ENCODE measurements at regions of chr1 and their contacts with region 1.

Region 1: DNA sequence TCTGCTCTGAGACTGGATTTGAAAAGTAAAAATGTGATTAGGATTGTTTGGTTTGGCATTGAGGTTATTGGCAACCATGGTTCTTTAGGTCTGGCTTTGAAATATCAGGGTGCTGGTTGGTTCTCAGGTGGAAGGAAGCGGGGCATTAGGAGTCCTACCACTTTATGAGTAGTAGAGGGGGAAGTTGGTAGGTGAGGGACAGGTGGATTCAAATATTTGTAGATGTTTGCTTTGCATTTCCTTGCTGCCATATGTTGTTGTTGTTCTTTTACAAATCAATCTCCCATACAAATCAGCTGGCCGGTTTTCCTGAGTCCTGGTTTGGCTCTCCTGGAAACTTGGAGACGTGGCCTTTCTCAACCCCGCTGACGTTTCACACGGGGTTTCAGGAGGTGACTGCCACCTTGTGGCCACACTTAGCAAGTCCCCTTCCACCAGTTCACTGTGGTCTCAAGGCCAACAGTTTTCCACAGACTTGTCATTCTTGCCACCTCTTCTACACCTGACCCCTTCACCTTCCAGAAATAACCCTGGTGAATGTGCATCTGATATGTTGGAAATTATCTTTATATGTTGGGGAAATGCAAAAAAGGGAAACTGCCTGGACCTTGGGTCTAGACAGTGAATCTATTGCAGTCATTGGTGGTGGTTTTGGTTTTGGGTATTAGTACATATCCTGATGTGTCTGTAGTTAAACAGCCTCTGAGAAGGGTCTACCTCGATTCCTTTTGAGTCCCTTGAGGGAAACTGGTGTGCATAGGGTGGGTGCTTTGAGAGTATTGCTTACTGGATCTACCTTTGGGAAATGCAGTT is 127.0 kb upstream of the KIAA0040 start:
- DNase-seq: peak; percentile 72
- H3K4me3 Mint-ChIP-seq: no peak overlapping the region
- H3K27ac Mint-ChIP-seq: no peak overlapping the region
- H3K4me1 Mint-ChIP-seq: peaks cover 10% of the 10 kb centered on the region
- H3K27me3 Mint-ChIP-seq: peaks cover 8% of the 10 kb centered on the region

Region 2: DNA sequence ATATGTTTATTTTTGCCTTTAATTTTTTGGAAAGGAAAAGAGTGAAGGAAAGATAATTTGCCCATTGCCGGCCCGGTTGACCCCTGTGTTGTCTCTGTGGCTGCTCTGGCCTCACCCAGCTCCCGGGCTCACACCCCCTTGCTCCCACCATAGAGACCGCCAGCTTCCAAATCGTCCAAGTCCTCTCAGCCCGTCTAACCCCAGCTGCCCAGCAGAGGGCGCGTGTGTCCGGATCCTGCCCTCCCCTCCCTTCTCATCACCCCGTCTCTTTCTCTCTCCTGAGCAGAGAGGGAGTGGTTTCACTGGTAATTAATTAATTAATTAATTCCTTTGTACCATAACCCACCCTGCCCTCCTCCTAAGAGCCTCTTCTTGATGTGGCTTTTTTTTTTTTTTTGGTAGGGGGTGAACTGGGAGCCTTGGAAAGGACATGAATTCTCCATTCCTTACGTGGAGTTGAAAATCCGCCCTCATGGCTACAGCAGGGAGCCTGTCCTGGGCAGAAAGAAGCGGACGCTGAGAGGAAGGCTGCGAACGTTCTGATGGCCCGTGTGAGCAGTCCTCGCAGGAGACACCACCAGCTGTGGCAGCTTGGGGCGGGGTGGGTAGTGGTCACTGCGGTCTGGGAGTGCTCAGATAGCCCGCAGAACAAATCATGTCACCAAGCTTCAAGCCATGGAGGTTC is 173.0 kb before region 1 on chr1:
- CTCF ChIA-PET with region 1: interaction called, 238 read pairs
- POLR2A ChIA-PET with region 1: interaction called, 14 read pairs
- DNase-seq: peak; percentile 70
- H3K4me3 Mint-ChIP-seq: no peak overlapping the region
- H3K27ac Mint-ChIP-seq: no peak overlapping the region
- H3K4me1 Mint-ChIP-seq: peaks cover 7% of the 10 kb centered on the region
- H3K27me3 Mint-ChIP-seq: peaks cover 27% of the 10 kb centered on the region

Region 3: DNA sequence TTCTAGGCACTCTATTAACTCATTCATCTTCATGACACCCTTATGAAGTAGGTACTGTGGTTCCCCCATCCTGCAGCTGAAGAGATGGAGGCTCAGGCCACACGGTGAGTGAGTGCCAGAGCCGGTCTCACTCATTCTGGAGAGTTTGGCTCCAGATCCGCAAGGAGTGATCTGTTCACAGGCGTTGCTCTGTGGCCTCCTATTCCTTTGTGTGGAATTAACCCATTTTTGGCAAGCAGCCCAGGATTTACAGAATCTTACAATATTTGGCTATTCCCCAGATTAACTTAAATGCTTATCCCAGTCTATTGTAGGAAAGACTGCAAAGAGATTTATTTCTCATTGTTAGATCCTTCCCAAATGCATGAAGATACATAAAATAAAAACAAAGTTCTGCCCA is 156.7 kb before region 1 on chr1:
- CTCF ChIA-PET with region 1: interaction called, 209 read pairs
- POLR2A ChIA-PET with region 1: no interaction called
- DNase-seq: no peak
- H3K4me3 Mint-ChIP-seq: no peak overlapping the region
- H3K27ac Mint-ChIP-seq: no peak overlapping the region
- H3K4me1 Mint-ChIP-seq: peaks cover 21% of the 10 kb centered on the region
- H3K27me3 Mint-ChIP-seq: no peaks in the 10 kb centered on the region

Region 4: DNA sequence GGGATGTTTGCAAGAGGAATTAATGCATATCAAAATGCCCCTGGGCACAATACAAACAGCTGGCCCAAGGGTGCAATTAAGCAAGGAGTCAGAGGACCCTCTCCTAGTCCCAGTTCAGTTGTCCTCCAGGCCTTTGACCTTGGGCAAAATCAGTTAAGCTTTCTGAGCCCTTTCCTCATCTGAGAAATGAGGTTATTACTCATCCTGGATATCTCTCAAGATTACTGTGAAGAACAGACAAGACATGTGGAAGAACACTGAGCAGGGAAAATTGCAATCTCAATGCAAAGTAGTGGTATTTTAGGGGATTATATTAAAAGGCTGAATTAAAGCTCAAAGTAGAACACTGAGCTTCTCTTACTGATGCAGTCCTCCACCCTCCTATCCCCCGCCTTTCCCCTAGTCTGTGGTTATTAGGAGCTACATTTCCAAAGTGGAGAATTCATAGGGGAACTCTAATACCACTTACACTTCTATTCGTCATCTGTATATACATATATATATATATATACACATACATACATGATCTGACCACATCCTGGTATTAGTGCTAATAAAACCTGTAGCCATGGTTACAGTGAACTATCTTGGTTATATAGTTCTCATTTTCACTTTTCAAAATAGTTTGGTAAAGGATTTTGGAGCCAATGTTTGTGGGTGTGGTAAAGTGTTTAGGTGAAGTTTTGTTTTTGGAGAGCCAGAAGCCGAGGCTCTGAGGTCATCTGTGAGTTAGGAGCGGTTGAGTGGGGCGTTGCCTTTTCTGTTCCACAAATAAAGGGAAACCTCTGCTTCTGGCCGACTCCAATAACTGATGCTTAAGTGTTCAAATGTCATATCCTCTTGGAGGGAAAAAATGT is 145.1 kb before region 1 on chr1:
- CTCF ChIA-PET with region 1: interaction called, 11 read pairs
- POLR2A ChIA-PET with region 1: no interaction called
- DNase-seq: no peak
- H3K4me3 Mint-ChIP-seq: no peak overlapping the region
- H3K27ac Mint-ChIP-seq: peak overlapping the region; percentile 38
- H3K4me1 Mint-ChIP-seq: peaks cover 64% of the 10 kb centered on the region
- H3K27me3 Mint-ChIP-seq: no peaks in the 10 kb centered on the region

Region 5: DNA sequence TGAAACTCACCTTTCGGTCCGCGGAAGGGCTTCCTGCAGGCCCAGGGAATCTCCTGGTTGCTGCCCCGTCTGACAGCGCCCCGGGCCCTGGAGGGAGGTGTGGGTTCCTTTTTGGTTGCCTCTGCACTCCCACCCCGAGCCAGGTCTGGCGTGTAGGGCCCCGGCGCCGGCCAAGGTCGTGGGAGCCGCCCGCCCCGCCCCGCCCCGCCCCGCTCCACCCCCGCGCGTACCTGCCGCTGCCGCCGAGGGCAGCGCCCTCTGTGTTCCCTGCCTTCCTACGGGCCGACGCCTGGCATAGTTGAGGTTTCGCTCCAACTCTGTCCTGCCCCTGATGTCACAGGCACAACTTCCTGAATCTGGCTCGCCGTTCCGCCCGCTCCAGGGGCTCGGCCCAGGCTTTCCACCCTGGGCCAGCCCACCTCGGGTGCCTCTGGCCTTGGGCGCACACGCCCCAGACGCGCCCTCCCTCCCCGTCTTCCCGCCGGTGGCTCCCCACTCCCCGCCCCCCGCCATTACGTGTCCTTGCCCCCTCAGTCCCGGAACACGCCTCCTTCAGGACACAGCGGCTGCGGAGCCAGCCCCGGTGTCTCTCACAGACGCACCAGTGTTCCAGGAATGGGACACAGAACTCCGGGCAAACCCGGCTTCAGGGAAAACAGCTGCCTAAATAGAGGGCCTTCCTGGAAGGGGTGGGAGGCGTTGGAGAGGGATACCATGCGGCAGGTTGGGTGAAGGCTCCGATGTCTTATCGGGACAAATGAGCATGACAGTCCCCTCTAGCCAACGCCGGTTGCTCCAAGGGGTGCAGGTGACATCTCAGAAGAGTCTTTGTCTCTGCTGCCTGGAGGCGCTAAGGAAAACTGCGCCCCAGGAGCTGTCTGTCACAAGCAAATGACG is 126.7 kb before region 1 on chr1 and contains the start of gene KIAA0040:
- CTCF ChIA-PET with region 1: interaction called, 57 read pairs
- POLR2A ChIA-PET with region 1: interaction called, 7 read pairs
- DNase-seq: peak; percentile 65
- H3K4me3 Mint-ChIP-seq: peak within 1 kb of the TSS; percentile 95
- H3K27ac Mint-ChIP-seq: peak within 1 kb of the TSS; percentile 93
- H3K4me1 Mint-ChIP-seq: peaks cover 52% of the 10 kb centered on the region
- H3K27me3 Mint-ChIP-seq: no peaks in the 10 kb centered on the region
- total RNA-seq, gene KIAA0040: 79.4 to 80.2 TPM

Region 6: GRCh38 chr1:175338387-175339135 is 18.9 kb after region 1 on chr1:
- CTCF ChIA-PET with region 1: interaction called, 20 read pairs
- POLR2A ChIA-PET with region 1: no interaction called
- DNase-seq: peak; percentile 55
- H3K4me3 Mint-ChIP-seq: no peak overlapping the region
- H3K27ac Mint-ChIP-seq: no peak overlapping the region
- H3K4me1 Mint-ChIP-seq: no peaks in the 10 kb centered on the region
- H3K27me3 Mint-ChIP-seq: peaks cover 20% of the 10 kb centered on the region

Measured in activated CD4-positive, alpha-beta memory T cell treated with anti-CD3 and anti-CD28 coated beads, Interleukin-2, amount 10 ng/mL, durations not matched to agents 7 days and 5 days (primary cell).